ENCODE measurements at regions of chr20 and their contacts with region 1.

Region 1: GRCh38 chr20:2206957-2207769 is 88.6 kb upstream of the TGM3 start:
- DNase-seq: peak; percentile 47 to 79
- ATAC-seq: peak; percentile 82 to 92 (median 87)
- H3K4me3 ChIP-seq: peak overlapping the region; percentile 26 to 68 (median 56)
- H3K27ac ChIP-seq: peak overlapping the region in 1 of 10 donors; percentile 46
- H3K4me1 ChIP-seq: peaks cover 0 to 33% (median 13%) of the 10 kb centered on the region in 9 donors
- H3K27me3 ChIP-seq: peaks cover 0 to 59% (median 37%) of the 10 kb centered on the region in 7 donors
- CTCF ChIP-seq: peak; percentile 51 to 89 (median 80)

Region 2: GRCh38 chr20:2301164-2301622 is 94.0 kb after region 1 on chr20:
- intact Hi-C with region 1: no loop called
- DNase-seq: peak in 1 of 2 donors; percentile 42
- ATAC-seq: peak; percentile 38 to 80 (median 72)
- H3K4me3 ChIP-seq: no peak overlapping the region
- H3K27ac ChIP-seq: peak overlapping the region in 2 of 10 donors; percentile 12 to 87
- H3K4me1 ChIP-seq: peaks cover 0 to 36% (median 0%) of the 10 kb centered on the region in 9 donors
- H3K27me3 ChIP-seq: peaks cover 0 to 48% (median 17%) of the 10 kb centered on the region in 7 donors
- CTCF ChIP-seq: no peak

Region 3: GRCh38 chr20:2349818-2350508 is 142.8 kb after region 1 on chr20:
- intact Hi-C with region 1: loop called in 1 of 10 experiments (anchors 10 kb)
- DNase-seq: no peak
- ATAC-seq: no peak
- H3K4me3 ChIP-seq: no peak overlapping the region
- H3K27ac ChIP-seq: no peak overlapping the region
- H3K4me1 ChIP-seq: peaks cover 0 to 6% (median 0%) of the 10 kb centered on the region in 9 donors
- H3K27me3 ChIP-seq: peaks cover 0 to 56% (median 44%) of the 10 kb centered on the region in 7 donors
- CTCF ChIP-seq: no peak

Region 4: GRCh38 chr20:2458919-2459499 is 251.8 kb after region 1 on chr20:
- intact Hi-C with region 1: loop called in 9 of 10 experiments (anchors 2 to 10 kb)
- DNase-seq: no peak
- ATAC-seq: no peak
- H3K4me3 ChIP-seq: no peak overlapping the region
- H3K27ac ChIP-seq: no peak overlapping the region
- H3K4me1 ChIP-seq: peaks cover 0 to 6% (median 0%) of the 10 kb centered on the region in 9 donors
- H3K27me3 ChIP-seq: no peaks in the 10 kb centered on the region
- CTCF ChIP-seq: no peak

Measured in heart right ventricle (tissue), 16 donors.